Right cardiac atrium (tissue), 5 donors: ENCODE measurements at regions of chr11 and their contacts with region 1.

Region 1: DNA sequence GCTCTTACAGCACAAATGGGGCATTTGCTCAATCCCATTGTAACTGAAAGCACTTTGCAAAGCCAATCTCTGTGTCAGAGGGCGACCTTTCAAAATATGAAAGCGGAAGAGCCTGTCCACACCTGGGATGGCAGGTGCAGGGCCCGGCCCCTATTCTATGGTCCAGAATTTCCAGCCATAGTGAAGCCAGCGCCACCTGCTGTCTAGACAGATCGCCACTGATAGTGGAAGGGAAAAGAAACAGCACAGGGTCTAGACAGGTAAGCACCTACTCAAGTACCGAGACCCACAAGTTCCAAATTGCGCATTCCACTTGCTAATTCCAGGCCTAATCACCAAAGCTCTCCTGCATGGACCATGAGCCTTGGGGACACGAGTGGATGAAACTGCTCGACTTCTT is 141.4 kb downstream of the NTM start:
- DNase-seq: peak in 1 of 3 donors; percentile 62
- ATAC-seq: peak in 1 of 2 donors; percentile 45
- H3K4me3 ChIP-seq: no peak overlapping the region
- H3K27ac ChIP-seq: no peak overlapping the region
- H3K4me1 ChIP-seq: no peaks in the 10 kb centered on the region
- H3K27me3 ChIP-seq: no peaks in the 10 kb centered on the region

Region 2: DNA sequence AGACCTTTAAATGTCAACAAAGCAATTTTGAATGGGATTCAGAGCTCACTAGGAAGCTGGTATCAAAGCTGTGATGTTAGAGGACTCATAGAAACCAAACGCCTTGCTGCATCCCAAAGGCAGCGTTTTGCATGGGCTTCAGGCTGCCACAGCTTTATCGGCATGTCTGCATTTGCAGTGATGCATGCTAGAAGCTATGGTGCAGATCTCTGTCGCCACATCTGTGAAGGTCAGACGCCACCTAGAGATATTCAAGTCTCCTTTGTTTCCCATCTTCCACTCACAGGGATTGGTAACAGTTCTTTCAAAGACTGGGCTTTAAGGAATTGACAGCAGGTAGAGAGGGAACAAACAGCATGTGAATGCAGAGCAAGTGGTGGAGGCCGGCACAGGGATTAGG is 93.6 kb before region 1 on chr11:
- intact Hi-C with region 1: loop called in 3 of 4 experiments (anchors 10 kb)
- DNase-seq: no peak
- ATAC-seq: no peak
- H3K4me3 ChIP-seq: no peak overlapping the region
- H3K27ac ChIP-seq: no peak overlapping the region
- H3K4me1 ChIP-seq: no peaks in the 10 kb centered on the region
- H3K27me3 ChIP-seq: no peaks in the 10 kb centered on the region